ENCODE measurements at regions of chr20 and their contacts with region 1.

Region 1: GRCh38 chr20:45128071-45128470 is 3.8 kb upstream of the WFDC12 start:
- DNase-seq: peak; percentile 27
- H3K4me3 Mint-ChIP-seq: no peak overlapping the region
- H3K27ac Mint-ChIP-seq: no peak overlapping the region
- H3K4me1 Mint-ChIP-seq: no peaks in the 10 kb centered on the region
- H3K27me3 Mint-ChIP-seq: peaks cover 20% of the 10 kb centered on the region
- CTCF ChIP-seq: no peak

Region 2: GRCh38 chr20:45111799-45112471 is 16.1 kb before region 1 on chr20:
- CTCF ChIA-PET with region 1: interaction called, 5 read pairs
- POLR2A ChIA-PET with region 1: interaction called, 10 read pairs
- intact Hi-C with region 1: no loop called
- DNase-seq: peak; percentile 50
- H3K4me3 Mint-ChIP-seq: no peak overlapping the region
- H3K27ac Mint-ChIP-seq: no peak overlapping the region
- H3K4me1 Mint-ChIP-seq: no peaks in the 10 kb centered on the region
- H3K27me3 Mint-ChIP-seq: peaks cover 10% of the 10 kb centered on the region
- CTCF ChIP-seq: peak; percentile 64

Region 3: DNA sequence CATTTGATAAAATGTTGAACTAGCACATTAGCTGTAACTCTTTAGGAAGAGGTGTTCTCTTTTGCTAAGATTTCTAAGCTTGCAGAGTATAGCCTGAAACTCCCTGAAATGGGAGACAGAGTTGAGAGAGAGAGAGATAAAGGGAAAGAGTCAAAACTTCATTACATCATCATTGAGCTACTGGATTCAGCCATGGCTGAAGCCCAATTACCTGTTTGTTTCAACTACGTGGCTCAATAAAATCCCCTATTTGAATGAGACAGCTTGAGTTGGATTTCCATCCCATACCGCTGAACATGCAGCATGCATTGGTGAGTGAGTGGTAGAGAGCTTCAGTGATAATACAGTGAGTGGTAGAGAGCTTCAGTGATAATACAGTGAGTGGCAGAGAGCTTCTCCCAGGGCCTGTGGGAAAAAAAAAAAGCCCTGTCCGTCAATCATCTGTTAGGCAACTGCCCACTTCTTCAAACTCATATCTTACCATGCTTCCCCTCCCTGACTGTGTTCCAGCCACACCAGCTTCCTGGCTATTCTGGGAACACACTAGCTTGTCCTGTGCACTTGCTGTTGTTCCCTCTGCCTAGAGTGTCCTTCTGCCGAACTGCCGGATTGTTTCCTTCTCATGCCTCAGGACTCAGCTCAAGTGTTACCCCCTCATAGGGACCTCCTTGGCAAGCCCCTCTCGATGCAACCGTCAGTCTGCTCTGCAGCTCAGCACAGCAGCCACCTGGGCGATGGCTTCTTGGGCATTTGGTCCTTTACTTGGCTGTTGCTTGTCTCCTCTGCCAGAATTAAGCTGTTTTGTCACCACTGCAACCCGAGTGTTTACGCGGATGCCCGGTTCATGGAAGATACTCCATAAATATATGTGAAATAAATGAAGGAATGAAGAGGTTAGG is 1675.3 kb after region 1 on chr20:
- CTCF ChIA-PET with region 1: no interaction called
- POLR2A ChIA-PET with region 1: no interaction called
- intact Hi-C with region 1: no loop called
- DNase-seq: no peak
- H3K4me3 Mint-ChIP-seq: no peak overlapping the region
- H3K27ac Mint-ChIP-seq: no peak overlapping the region
- H3K4me1 Mint-ChIP-seq: no peaks in the 10 kb centered on the region
- H3K27me3 Mint-ChIP-seq: peaks cover 36% of the 10 kb centered on the region
- CTCF ChIP-seq: no peak